Naive thymus-derived CD8-positive, alpha-beta T cell (primary cell): ENCODE measurements at regions of chr7 and their contacts with region 1.

Region 1: GRCh38 chr7:79912213-79912633 is 222.4 kb upstream of the GNAI1 start:
- DNase-seq: peak in 5 of 10 donors; percentile 19 to 72 (median 34)
- ATAC-seq: peak; percentile 76 to 83
- H3K4me3 Mint-ChIP-seq: peak overlapping the region; percentile 43 to 77 (median 69)
- H3K27ac Mint-ChIP-seq: peak overlapping the region; percentile 53 to 93 (median 80)
- H3K4me1 Mint-ChIP-seq: peaks cover 35 to 94% (median 67%) of the 10 kb centered on the region in 4 donors
- H3K27me3 Mint-ChIP-seq: no peaks in the 10 kb centered on the region

Region 2: GRCh38 chr7:79897166-79897565 is 15.1 kb before region 1 on chr7:
- POLR2A ChIA-PET with region 1: no interaction called
- DNase-seq: no peak
- ATAC-seq: no peak
- H3K4me3 Mint-ChIP-seq: no peak overlapping the region
- H3K27ac Mint-ChIP-seq: no peak overlapping the region
- H3K4me1 Mint-ChIP-seq: no peaks in the 10 kb centered on the region
- H3K27me3 Mint-ChIP-seq: no peaks in the 10 kb centered on the region

Region 3: GRCh38 chr7:79977481-79977880 is 65.3 kb after region 1 on chr7:
- POLR2A ChIA-PET with region 1: interaction called, 26 read pairs
- DNase-seq: no peak
- ATAC-seq: no peak
- H3K4me3 Mint-ChIP-seq: no peak overlapping the region
- H3K27ac Mint-ChIP-seq: peak overlapping the region in 4 of 10 donors; percentile 18 to 88 (median 74)
- H3K4me1 Mint-ChIP-seq: peaks cover 6 to 21% (median 15%) of the 10 kb centered on the region in 4 donors
- H3K27me3 Mint-ChIP-seq: no peaks in the 10 kb centered on the region

Region 4: GRCh38 chr7:80047856-80048459 is 135.7 kb after region 1 on chr7:
- POLR2A ChIA-PET with region 1: no interaction called
- DNase-seq: peak in 2 of 10 donors; percentile 12 to 15
- ATAC-seq: peak in 1 of 2 donors; percentile 32
- H3K4me3 Mint-ChIP-seq: no peak overlapping the region
- H3K27ac Mint-ChIP-seq: no peak overlapping the region
- H3K4me1 Mint-ChIP-seq: no peaks in the 10 kb centered on the region
- H3K27me3 Mint-ChIP-seq: no peaks in the 10 kb centered on the region